ENCODE measurements at regions of chr3 and their contacts with region 1.

Region 1: GRCh38 chr3:99929745-99930139 is 112.1 kb downstream of the CMSS1 start:
- DNase-seq: peak in 2 of 7 donors; percentile 27 to 61
- H3K4me3 ChIP-seq: no peak overlapping the region
- H3K27ac ChIP-seq: peak overlapping the region in 2 of 5 donors; percentile 10 to 12
- H3K4me1 ChIP-seq: peaks cover 3 to 28% of the 10 kb centered on the region in 2 donors
- H3K27me3 ChIP-seq: no peaks in the 10 kb centered on the region
- CTCF ChIP-seq: no peak
- POLR2A ChIP-seq: no peak

Region 2: DNA sequence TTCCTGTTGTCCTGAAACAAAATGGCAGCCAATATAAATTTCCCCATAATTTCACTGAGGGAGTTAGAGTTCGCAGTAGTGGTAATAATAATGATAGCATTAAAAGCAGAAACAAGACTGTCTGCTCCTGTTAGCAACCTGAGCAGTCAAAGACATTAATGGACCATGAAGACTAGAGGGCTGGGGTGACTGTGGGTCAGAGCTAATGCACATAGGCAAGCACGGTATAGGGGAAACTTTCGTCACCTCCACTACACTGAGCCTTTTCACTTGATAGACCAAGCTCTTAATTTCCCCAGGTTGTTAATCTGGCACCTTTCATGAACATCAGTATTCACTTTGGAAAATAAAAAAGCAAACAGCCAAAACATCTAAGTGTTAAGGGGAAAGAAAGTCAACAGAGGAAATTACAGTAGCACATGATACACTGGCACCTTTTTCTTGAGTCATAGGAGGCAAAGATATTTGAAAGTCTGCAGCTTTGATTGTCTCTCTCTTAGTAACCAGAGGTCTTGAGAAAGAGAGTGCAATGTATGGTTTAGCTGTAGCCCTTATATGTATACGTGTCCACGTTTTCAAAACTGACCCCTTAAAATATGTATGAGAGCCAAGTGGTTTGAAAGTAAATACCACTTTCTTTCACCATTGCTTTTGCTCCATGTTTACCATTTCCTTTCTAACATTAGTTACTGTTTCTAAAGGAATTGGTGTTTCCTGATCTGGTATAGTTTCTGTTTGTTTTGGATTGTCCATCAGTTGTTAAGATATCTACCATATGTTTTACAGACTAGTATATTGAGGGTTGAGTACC is 79.7 kb after region 1 on chr3:
- intact Hi-C with region 1: loop called in 1 of 2 experiments (anchors 10 kb)
- DNase-seq: no peak
- H3K4me3 ChIP-seq: no peak overlapping the region
- H3K27ac ChIP-seq: no peak overlapping the region
- H3K4me1 ChIP-seq: peaks cover 5 to 13% of the 10 kb centered on the region in 2 donors
- H3K27me3 ChIP-seq: no peaks in the 10 kb centered on the region
- CTCF ChIP-seq: no peak
- POLR2A ChIP-seq: no peak